Adrenal gland (tissue), 19 donors: ENCODE measurements at regions of chr22 and their contacts with region 1.

Region 1: GRCh38 chr22:26589845-26590736 is at the start of gene TPST2:
- DNase-seq: peak; percentile 70 to 88 (median 80)
- H3K4me3 ChIP-seq: peak within 1 kb of the TSS; percentile 9 to 92 (median 74)
- H3K27ac ChIP-seq: peak within 1 kb of the TSS; percentile 18 to 95 (median 77)
- H3K4me1 ChIP-seq: peaks cover 9 to 23% of the 10 kb centered on the region in 2 donors
- H3K27me3 ChIP-seq: no peaks in the 10 kb centered on the region
- CTCF ChIP-seq: peak in 1 of 6 experiments; percentile 8
- POLR2A ChIP-seq: peak in 1 of 2 donors; percentile 81
- total RNA-seq, gene TPST2: 17.6 to 167 (median 69.7) TPM

Region 2: GRCh38 chr22:26431261-26431995 is 158.7 kb before region 1 on chr22:
- intact Hi-C with region 1: no loop called
- DNase-seq: no peak
- H3K4me3 ChIP-seq: no peak overlapping the region
- H3K27ac ChIP-seq: no peak overlapping the region
- H3K4me1 ChIP-seq: peaks cover 0 to 4% of the 10 kb centered on the region in 2 donors
- H3K27me3 ChIP-seq: no peaks in the 10 kb centered on the region
- CTCF ChIP-seq: no peak
- POLR2A ChIP-seq: no peak

Region 3: GRCh38 chr22:26489447-26490031 is 100.6 kb before region 1 on chr22:
- intact Hi-C with region 1: loop called in 1 of 2 experiments (anchors 5 kb)
- DNase-seq: no peak
- H3K4me3 ChIP-seq: no peak overlapping the region
- H3K27ac ChIP-seq: no peak overlapping the region
- H3K4me1 ChIP-seq: peaks cover 12 to 23% of the 10 kb centered on the region in 2 donors
- H3K27me3 ChIP-seq: no peaks in the 10 kb centered on the region
- CTCF ChIP-seq: no peak
- POLR2A ChIP-seq: no peak

Region 4: DNA sequence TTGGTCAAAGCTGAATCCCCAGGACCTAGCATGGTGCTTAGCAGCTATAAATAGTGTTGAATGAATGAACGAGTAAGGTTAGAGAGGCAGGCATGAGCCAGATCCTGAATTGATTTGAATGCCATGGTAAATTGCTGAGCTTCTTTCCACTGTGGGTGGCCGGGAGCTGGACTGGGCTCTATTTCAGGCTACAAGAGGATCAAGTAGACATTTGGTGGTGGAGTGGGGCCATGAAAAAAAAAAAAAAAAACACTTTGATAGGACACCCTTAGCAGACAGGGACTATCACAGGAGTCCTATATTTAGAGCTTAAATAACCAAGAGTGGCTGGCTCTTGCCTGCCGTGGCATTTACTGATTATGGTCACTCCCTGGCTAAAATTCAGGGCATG is 144.9 kb after region 1 on chr22:
- intact Hi-C with region 1: no loop called
- DNase-seq: no peak
- H3K4me3 ChIP-seq: no peak overlapping the region
- H3K27ac ChIP-seq: no peak overlapping the region
- H3K4me1 ChIP-seq: no peaks in the 10 kb centered on the region
- H3K27me3 ChIP-seq: no peaks in the 10 kb centered on the region
- CTCF ChIP-seq: no peak
- POLR2A ChIP-seq: no peak

Region 5: GRCh38 chr22:26751217-26751616 is 161.1 kb after region 1 on chr22:
- intact Hi-C with region 1: no loop called
- DNase-seq: peak in 6 of 7 donors; percentile 29 to 62 (median 44)
- H3K4me3 ChIP-seq: no peak overlapping the region
- H3K27ac ChIP-seq: peak overlapping the region in 1 of 5 donors; percentile 14
- H3K4me1 ChIP-seq: peaks cover 3 to 4% of the 10 kb centered on the region in 2 donors
- H3K27me3 ChIP-seq: no peaks in the 10 kb centered on the region
- CTCF ChIP-seq: no peak
- POLR2A ChIP-seq: no peak